ENCODE measurements at regions of chr14 and their contacts with region 1.

Region 1: DNA sequence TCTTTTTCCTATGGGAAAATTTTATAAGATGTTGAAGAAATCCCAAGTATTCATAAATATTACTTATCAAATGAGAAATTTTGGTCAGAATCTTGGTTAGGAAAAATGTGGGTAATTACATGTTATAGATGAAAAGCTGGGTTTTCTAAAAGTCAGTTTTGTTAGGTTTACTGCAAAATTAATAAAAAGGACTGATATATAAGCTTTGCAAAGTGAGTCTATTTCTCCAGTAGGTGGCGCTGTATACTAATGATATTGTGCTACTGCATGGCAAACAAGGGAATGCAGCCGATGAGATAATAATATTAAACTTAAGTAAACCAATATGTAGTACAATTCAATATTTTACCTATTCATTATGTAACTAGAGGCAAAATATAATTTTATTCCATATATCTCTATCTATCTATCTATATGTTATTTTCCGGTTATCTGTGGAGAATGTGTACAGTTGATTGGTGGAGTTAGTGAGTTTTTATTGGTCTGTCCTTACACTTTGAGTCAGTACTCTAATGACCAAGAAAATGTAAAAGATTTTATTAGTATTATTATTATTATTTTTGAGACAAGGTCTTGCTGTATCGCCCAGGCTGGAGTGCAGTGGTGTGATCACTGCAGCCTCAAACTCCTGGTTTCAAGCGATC is 32.9 kb downstream of the MIPOL1 start:
- DNase-seq: peak; percentile 35 to 70
- ATAC-seq: peak; percentile 73 to 85; a peak in 5 of 6 replicates
- H3K4me3 ChIP-seq: no peak overlapping the region
- H3K27ac ChIP-seq: no peak overlapping the region
- H3K4me1 ChIP-seq: 0 out of 3 replicates have a peak, but pooled peaks cover 3% of the 10 kb centered on the region
- CTCF ChIP-seq: peak; percentile 82
- EP300 ChIP-seq: no peak
- POLR2A ChIP-seq: no peak
- RAD21 ChIP-seq: peak; percentile 55 to 57

Region 2: GRCh38 chr14:36996133-36996856 is 234.4 kb before region 1 on chr14:
- CTCF ChIA-PET with region 1: no interaction called
- POLR2A ChIA-PET with region 1: no interaction called
- DNase-seq: peak; percentile 29 to 59
- ATAC-seq: peak; percentile 88 to 99
- H3K4me3 ChIP-seq: no peak overlapping the region
- H3K27ac ChIP-seq: peak overlapping the region; percentile 57 to 62; a peak in 5 of 6 replicates
- H3K4me1 ChIP-seq: peaks cover 25% of the 10 kb centered on the region
- CTCF ChIP-seq: no peak
- EP300 ChIP-seq: no peak
- POLR2A ChIP-seq: no peak
- RAD21 ChIP-seq: no peak

Region 3: DNA sequence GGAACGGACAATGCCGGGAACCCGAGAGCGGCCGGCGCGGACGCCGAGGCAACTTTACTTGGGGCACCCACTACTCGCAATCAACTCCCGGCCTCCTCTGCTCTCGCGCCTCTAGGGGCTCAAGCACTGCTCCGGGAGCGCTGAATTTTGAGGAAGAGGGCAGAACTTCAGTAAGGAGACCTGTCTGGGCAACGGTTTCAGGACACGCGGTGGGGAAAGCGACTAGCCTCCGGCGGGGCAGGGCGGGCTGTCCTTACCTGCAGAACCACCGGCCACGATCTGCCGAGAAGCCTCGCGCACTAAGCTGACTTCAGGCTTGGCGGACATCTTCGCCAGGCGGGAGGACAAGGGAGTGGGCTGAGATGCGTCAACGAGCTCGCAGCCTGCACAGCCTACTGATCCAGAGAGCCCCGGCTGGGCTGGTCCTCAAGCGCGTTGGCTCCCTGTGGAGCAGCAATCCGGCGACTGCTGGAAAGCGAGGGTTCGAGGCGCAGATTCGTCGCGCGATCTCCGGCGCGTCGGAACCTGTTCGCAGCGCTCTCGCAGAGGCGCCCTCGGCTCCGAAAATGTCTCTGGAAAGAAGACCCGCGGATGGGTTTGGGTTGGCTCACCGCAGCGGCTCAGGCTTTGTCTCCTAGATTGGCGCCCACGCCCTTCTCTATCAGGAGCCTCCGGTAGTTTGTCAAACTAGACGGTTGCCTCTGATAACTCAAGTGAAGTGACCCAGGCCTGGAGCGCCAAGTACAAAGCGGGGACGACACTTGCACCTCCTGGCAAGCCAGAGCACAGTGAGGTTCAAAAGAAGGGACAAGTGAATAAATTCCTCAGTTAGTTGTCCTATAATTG is 58.4 kb before region 1 on chr14 and contains the start of gene SLC25A21:
- CTCF ChIA-PET with region 1: interaction called, 11 read pairs
- POLR2A ChIA-PET with region 1: interaction called, 4 read pairs
- DNase-seq: peak; percentile 90 to 91
- ATAC-seq: peak; percentile 97 to 98
- H3K4me3 ChIP-seq: peak within 1 kb of the TSS; percentile 59
- H3K27ac ChIP-seq: peak within 1 kb of the TSS; percentile 82 to 89
- H3K4me1 ChIP-seq: peaks cover 7% of the 10 kb centered on the region; the same call in 2 of the 3 replicates
- CTCF ChIP-seq: no peak
- EP300 ChIP-seq: no peak
- POLR2A ChIP-seq: peak; percentile 84
- RAD21 ChIP-seq: peak in 1 of 2 experiments; percentile 16; a peak in 1 of 5 replicates
- polyA plus RNA-seq, gene SLC25A21: 1.3 and 1.4 TPM in 2 replicates

Region 4: DNA sequence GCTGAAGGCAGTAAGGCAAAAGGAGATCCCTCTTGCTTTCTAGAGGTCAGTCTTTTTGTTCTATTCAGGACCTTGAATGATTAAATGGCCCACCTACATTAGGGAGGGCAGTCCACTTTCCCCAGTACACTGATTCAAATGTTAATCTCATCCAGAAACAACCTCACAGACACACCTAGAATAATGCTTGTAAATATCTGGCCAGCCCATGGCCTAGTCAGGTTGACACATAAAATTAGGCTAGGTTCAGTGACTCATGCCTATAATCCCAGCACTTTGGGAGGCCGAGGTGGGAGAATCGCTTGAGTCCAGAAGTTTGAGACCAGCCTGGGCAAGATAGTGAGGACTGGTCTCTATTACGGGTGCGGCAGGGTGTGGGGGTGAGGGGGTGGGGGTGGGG is 10.5 kb after region 1 on chr14:
- CTCF ChIA-PET with region 1: interaction called, 16 read pairs
- POLR2A ChIA-PET with region 1: no interaction called
- DNase-seq: no peak
- ATAC-seq: no peak
- H3K4me3 ChIP-seq: no peak overlapping the region
- H3K27ac ChIP-seq: no peak overlapping the region
- H3K4me1 ChIP-seq: no peaks in the 10 kb centered on the region; the same call in 2 of the 3 replicates
- CTCF ChIP-seq: no peak
- EP300 ChIP-seq: no peak
- POLR2A ChIP-seq: no peak
- RAD21 ChIP-seq: no peak

Measured in A549 (cell line).